ENCODE measurements at regions of chr6 and their contacts with region 1.

Region 1: GRCh38 chr6:31769684-31770371 is 7.3 kb downstream of the VWA7 start:
- DNase-seq: peak; percentile 66 to 79 (median 79)
- H3K4me3 ChIP-seq: peak overlapping the region in 1 of 3 experiments; percentile 55
- H3K4me3 Mint-ChIP-seq: no peak overlapping the region
- H3K27ac ChIP-seq: peak overlapping the region; percentile 82 to 88
- H3K27ac Mint-ChIP-seq: peak overlapping the region; percentile 91 to 96 (median 94)
- H3K4me1 ChIP-seq: peaks cover 29 to 30% of the 10 kb centered on the region in 2 donors
- H3K4me1 Mint-ChIP-seq: peaks cover 29% of the 10 kb centered on the region
- H3K27me3 ChIP-seq: no peaks in the 10 kb centered on the region
- H3K27me3 Mint-ChIP-seq: peaks cover 0 to 11% (median 3%) of the 10 kb centered on the region in 3 donors
- CTCF ChIP-seq: peak; percentile 78

Region 2: DNA sequence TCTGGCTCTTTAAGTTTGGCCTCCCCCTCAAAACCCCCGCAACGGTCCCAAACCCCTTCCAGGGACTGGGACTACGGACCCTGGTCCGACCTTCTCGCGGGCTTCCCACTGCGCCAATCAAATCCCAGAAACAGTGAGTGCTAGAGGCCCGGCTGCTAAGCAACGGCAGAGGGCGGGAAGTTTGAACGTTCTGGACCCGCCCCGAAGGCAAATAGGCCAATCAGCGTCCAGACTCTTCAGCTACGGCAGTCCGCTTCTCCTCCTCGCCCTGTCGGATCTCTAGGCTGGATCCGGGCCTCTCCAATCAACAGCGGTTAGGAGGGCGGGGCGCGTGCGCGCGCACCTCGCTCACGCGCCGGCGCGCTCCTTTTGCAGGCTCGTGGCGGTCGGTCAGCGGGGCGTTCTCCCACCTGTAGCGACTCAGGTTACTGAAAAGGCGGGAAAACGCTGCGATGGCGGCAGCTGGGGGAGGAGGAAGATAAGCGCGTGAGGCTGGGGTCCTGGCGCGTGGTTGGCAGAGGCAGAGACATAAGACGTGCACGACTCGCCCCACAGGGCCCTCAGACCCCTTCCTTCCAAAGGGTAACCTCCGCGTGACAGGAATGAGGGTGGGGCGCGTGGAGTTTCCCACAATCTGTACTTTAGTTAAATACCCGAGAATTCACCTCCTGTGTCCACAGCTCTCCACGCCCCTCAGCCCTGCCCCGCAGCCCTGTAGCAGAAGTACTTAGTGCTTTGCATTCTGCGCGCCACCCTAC is 30.0 kb before region 1 on chr6 and contains the start of gene MSH5:
- intact Hi-C with region 1: loop called in 1 of 2 experiments (anchors 2 kb)
- DNase-seq: peak; percentile 97 to 100 (median 98)
- H3K4me3 ChIP-seq: peak within 1 kb of the TSS; percentile 58 to 100 (median 71)
- H3K4me3 Mint-ChIP-seq: peak within 1 kb of the TSS; percentile 92 to 98
- H3K27ac ChIP-seq: peak within 1 kb of the TSS; percentile 91 to 99
- H3K27ac Mint-ChIP-seq: peak within 1 kb of the TSS; percentile 95 to 100 (median 99)
- H3K4me1 ChIP-seq: peaks cover 42 to 54% of the 10 kb centered on the region in 2 donors
- H3K4me1 Mint-ChIP-seq: peaks cover 50% of the 10 kb centered on the region
- H3K27me3 ChIP-seq: no peaks in the 10 kb centered on the region
- H3K27me3 Mint-ChIP-seq: peaks cover 0 to 2% (median 2%) of the 10 kb centered on the region in 3 donors
- CTCF ChIP-seq: no peak
- polyA plus RNA-seq, gene MSH5: 0.58 to 31.2 (median 1.9) TPM

Measured in CD14-positive monocyte (primary cell).